Heart left ventricle (tissue), 16 donors: ENCODE measurements at regions of chr9 and their contacts with region 1.

Region 1: GRCh38 chr9:83199243-83199642 is 136.3 kb upstream of the RASEF start:
- DNase-seq: peak in 4 of 5 donors; percentile 36 to 46 (median 41)
- ATAC-seq: peak; percentile 82 to 97 (median 92)
- H3K4me3 ChIP-seq: no peak overlapping the region
- H3K27ac ChIP-seq: no peak overlapping the region
- H3K4me1 ChIP-seq: peaks cover 0 to 8% (median 0%) of the 10 kb centered on the region in 12 donors
- H3K27me3 ChIP-seq: peaks cover 0 to 9% (median 0%) of the 10 kb centered on the region in 9 donors
- CTCF ChIP-seq: peak; percentile 35 to 80 (median 67)
- POLR2A ChIP-seq: no peak

Region 2: DNA sequence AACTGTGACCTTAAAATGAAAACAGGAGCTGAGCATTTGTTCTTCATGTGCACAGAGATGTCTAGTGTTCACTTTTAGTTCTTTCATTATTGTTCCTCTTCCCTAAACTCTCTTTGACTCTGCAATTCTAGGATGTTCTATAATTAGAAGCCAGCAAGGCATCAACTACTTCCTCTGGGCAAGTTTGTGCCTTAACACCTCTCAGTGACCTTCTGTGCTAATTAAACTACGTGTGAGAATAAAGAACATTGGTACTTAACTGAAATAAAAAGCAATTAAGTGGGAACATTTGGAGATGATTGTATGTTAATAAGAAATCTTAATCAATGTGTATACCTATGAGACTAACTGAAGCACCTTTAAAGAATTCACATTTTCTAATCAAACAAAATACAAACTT is 379.1 kb before region 1 on chr9:
- intact Hi-C with region 1: no loop called
- DNase-seq: no peak
- ATAC-seq: no peak
- H3K4me3 ChIP-seq: no peak overlapping the region
- H3K27ac ChIP-seq: no peak overlapping the region
- H3K4me1 ChIP-seq: no peaks in the 10 kb centered on the region
- H3K27me3 ChIP-seq: peaks cover 0 to 2% (median 0%) of the 10 kb centered on the region in 9 donors
- CTCF ChIP-seq: no peak
- POLR2A ChIP-seq: no peak

Region 3: DNA sequence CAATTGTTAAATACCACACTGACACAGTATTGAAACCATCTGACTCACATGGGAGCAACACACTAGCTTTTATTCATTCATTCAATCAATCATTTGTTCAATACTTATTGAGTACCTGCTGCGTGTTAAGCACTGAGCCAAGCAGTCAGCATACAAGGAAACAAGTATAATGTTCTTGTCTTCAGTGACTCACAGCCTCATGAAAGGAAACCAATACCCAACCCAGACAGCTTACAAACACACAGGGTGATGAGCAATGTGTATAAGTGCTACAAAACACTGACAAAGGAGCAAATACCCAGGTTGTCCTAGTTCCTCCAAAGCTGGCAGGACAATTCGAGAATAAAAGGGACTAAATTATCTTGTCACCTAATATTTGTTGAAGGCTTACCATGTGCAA is 68.7 kb before region 1 on chr9:
- intact Hi-C with region 1: loop called in 1 of 10 experiments (anchors 10 kb)
- DNase-seq: no peak
- ATAC-seq: no peak
- H3K4me3 ChIP-seq: no peak overlapping the region
- H3K27ac ChIP-seq: no peak overlapping the region
- H3K4me1 ChIP-seq: no peaks in the 10 kb centered on the region
- H3K27me3 ChIP-seq: no peaks in the 10 kb centered on the region
- CTCF ChIP-seq: no peak
- POLR2A ChIP-seq: no peak

Region 4: DNA sequence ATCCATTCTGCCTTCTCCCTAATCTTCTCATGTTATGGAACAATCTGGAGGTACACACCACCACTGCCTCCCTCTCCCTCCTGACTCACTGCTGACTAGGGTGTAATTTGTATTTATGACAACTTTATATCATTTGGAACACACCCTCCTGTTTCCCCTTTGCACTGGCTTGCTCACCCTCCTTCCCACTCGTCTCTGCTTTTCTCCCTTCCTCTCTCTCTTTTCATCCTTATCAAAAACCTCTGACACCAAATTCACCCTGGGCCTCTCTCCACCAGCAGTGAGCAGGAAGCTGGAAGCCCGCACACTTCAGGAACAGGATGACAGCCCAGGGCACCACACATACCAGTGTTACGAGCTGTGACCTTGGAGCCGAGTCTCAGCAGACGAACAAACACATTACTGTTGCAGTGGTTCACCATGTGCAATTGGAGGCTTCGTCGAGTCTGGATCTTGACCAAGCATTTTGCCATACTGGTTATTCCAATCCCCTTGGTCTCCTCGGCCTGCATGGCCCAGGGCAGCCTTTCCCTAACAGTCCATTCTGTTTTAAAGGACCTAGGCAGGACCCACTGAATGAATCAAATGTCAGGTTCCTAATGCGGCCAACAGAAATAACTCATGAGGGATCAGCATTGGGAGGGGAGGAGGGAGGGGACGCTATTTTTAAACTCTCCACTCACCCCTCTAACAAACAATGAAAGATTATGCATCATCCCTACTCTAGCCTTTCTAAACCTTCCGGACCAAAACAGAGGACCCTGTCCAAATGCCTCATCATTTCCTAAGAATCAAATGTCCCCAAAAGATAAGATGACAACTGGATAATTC is 67.6 kb after region 1 on chr9:
- intact Hi-C with region 1: no loop called
- DNase-seq: peak in 4 of 5 donors; percentile 60 to 86 (median 70)
- ATAC-seq: peak; percentile 92 to 94 (median 94)
- H3K4me3 ChIP-seq: peak overlapping the region in 10 of 12 donors; percentile 19 to 54 (median 46)
- H3K27ac ChIP-seq: peak overlapping the region; percentile 66 to 93 (median 81)
- H3K4me1 ChIP-seq: peaks cover 2 to 71% (median 35%) of the 10 kb centered on the region in 12 donors
- H3K27me3 ChIP-seq: no peaks in the 10 kb centered on the region
- CTCF ChIP-seq: no peak
- POLR2A ChIP-seq: no peak

Region 5: DNA sequence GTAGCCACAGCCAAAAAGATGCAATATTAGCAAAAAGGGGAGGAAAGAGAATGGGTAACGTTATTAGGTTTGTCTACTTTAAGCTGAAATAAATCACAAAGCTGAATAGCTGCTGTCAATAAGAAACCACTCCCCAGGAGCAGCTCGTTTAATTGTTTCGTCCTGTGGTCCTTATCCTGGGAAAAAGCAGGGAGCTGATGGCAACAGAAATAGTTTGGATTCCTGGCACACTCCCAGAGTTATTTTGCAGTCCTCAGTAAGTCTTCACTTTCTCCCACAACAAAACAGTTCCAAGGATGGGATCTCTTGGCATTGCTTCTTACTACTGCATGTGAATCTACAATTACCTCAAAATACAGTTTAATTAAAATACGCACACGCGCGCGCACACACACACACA is 310.2 kb after region 1 on chr9:
- intact Hi-C with region 1: no loop called
- DNase-seq: peak in 1 of 5 donors; percentile 27
- ATAC-seq: peak in 2 of 4 donors; percentile 36 to 54
- H3K4me3 ChIP-seq: no peak overlapping the region
- H3K27ac ChIP-seq: peak overlapping the region in 6 of 12 donors; percentile 24 to 53 (median 48)
- H3K4me1 ChIP-seq: peaks cover 0 to 38% (median 21%) of the 10 kb centered on the region in 12 donors
- H3K27me3 ChIP-seq: no peaks in the 10 kb centered on the region
- CTCF ChIP-seq: no peak
- POLR2A ChIP-seq: no peak

Region 6: DNA sequence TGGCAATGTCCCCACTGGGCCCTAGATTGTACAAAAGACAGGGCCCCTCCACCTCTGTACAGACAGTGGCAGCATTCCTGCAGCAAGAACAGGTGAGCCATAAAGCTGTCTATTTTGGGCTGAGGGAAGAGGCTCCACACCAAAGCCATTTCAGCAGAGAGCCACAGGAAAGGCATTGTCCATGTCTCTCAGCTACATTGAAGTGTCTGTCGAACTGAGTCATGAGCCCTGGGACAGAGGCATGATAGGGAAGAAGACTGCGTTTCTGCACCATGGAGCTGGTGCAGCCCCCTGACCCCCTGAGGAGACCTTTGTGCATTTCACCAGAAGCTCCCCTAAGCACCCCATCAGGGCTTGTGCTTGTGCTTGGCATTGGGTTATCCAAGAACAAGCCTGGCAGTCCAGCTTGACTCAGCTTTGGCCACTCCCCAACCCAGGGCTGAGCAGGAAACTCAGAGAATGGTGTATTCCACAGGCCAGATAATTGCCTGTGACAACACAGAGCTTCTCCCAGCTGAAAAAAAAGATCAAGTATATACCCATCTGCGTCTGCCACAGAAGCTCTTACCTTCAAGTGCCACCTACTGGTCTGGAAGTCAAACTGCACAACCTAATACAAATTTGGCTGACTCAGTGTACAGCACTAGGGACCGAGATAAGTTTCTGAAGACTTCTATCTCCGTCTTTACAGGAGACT is 344.9 kb after region 1 on chr9:
- intact Hi-C with region 1: loop called in 5 of 10 experiments (anchors 5 kb)
- DNase-seq: peak in 3 of 5 donors; percentile 35 to 50 (median 43)
- ATAC-seq: peak; percentile 73 to 92 (median 92)
- H3K4me3 ChIP-seq: no peak overlapping the region
- H3K27ac ChIP-seq: peak overlapping the region in 1 of 12 donors; percentile 21
- H3K4me1 ChIP-seq: peaks cover 0 to 12% (median 3%) of the 10 kb centered on the region in 12 donors
- H3K27me3 ChIP-seq: no peaks in the 10 kb centered on the region
- CTCF ChIP-seq: peak; percentile 64 to 86 (median 77)
- POLR2A ChIP-seq: no peak

Region 7: DNA sequence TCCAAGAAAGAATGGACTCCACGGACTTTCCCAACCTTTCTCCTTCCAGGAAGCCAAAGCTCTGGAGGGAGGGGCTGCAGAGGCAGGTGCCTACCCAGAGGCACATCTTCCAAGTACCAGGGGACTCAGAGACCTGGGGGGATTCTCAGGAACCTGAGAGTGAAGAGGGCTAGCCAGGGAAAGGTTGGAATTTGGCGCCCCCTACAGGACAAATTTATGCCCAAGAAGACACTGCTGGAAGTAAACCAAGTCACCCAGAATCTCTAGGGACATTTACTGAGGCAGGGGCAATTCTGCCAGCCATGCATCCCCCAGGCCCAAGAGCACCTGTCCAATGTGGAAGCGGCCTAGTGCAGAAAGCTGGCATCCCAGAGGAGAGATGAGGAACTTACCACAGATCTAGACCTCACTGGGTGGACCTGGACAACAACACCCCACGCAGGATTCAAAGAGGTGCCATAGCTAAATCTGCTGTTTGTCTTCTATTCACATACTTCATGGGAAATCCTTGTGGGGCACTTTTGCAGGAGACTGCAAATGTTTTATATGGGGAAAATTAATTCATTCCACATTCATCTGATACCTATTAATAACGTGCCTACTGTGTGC is 397.8 kb after region 1 on chr9:
- intact Hi-C with region 1: loop called in 5 of 10 experiments (anchors 5 to 10 kb)
- DNase-seq: peak in 2 of 5 donors; percentile 21 to 27
- ATAC-seq: peak in 1 of 4 donors; percentile 49
- H3K4me3 ChIP-seq: no peak overlapping the region
- H3K27ac ChIP-seq: no peak overlapping the region
- H3K4me1 ChIP-seq: no peaks in the 10 kb centered on the region
- H3K27me3 ChIP-seq: no peaks in the 10 kb centered on the region
- CTCF ChIP-seq: peak; percentile 56 to 80 (median 66)
- POLR2A ChIP-seq: no peak

Region 8: DNA sequence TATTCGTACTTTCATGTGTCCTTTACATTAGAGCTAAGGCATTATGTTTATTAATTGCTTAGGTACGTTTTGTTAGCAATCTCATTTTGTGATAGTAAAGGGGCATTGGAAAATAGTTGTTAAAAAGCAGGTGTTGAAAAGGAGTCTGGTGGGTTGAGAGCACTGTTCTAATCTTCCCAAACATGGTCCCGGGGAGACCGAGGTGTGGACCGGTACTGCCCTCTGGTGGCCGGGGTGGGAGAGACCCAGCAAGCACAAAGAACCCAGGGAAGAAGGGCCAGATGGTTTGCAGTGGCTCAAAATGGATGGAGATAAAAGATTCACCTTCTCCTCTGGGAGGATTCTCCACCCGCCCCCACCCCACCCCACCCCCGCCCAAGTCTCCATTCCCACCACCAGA is 449.8 kb after region 1 on chr9:
- intact Hi-C with region 1: loop called in 1 of 10 experiments (anchors 10 kb)
- DNase-seq: peak; percentile 60 to 83 (median 61)
- ATAC-seq: peak; percentile 58 to 81 (median 76)
- H3K4me3 ChIP-seq: no peak overlapping the region
- H3K27ac ChIP-seq: peak overlapping the region in 2 of 12 donors; percentile 15 to 34
- H3K4me1 ChIP-seq: peaks cover 0 to 15% (median 1%) of the 10 kb centered on the region in 12 donors
- H3K27me3 ChIP-seq: no peaks in the 10 kb centered on the region
- CTCF ChIP-seq: peak; percentile 60 to 77 (median 71)
- POLR2A ChIP-seq: no peak

Region 9: DNA sequence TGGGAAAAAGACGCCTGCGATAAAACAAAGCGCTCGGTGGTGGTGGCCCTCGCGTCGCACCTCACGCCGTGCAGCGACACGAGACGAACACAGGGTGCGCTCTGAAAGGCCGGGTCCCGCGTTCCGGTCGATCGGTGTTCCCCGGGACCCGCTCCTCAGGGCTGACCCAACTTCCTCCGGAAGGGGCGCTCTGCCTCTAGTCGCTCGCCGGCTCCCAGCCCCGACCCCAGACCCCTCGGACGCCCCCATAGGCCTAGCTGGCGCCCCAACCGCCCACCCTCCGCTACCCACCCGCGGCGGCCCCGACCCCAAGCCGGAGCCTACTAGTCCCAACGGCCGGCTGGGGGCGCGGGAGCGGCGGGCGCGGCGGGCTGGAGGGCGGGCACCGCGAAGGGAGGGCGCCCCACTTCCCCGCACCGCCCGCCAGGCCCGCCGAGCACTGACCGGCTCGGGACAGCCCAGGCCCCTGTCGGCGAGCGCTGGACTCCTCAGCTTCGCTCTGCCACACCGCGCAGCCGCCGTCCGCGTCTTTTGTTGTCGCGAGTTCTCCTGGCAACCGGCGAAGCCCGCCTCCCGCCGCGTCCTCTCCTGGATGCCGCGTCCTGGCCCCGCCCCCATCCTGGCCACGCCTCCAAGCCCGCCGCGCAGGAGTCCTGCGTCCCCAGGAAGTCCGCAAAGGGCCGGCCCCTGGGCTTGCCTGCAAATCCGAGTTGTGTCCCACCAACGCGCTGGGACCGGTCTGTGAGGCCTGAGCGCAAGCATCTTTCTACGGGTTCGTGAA is 721.9 kb after region 1 on chr9 and contains the start of gene KIF27:
- intact Hi-C with region 1: loop called in 2 of 10 experiments (anchors 10 kb)
- DNase-seq: peak; percentile 99 to 100 (median 99)
- ATAC-seq: peak; percentile 98 to 99 (median 99)
- H3K4me3 ChIP-seq: peak within 1 kb of the TSS; percentile 65 to 96 (median 76)
- H3K27ac ChIP-seq: peak within 1 kb of the TSS; percentile 66 to 98 (median 92)
- H3K4me1 ChIP-seq: peaks cover 0 to 12% (median 5%) of the 10 kb centered on the region in 12 donors
- H3K27me3 ChIP-seq: no peaks in the 10 kb centered on the region
- CTCF ChIP-seq: peak in 11 of 12 donors; percentile 21 to 56 (median 37)
- POLR2A ChIP-seq: peak; percentile 26 to 89
- total RNA-seq, gene KIF27: 2.5 to 4.2 (median 3.2) TPM